Astrocyte of the cerebellum (primary cell): ENCODE measurements at regions of chr11 and their contacts with region 1.

Region 1: GRCh38 chr11:81687057-81687456 is 1046.6 kb downstream of the FAM181B start:
- DNase-seq: no peak
- H3K4me3 ChIP-seq: no peak overlapping the region
- CTCF ChIP-seq: no peak

Region 2: DNA sequence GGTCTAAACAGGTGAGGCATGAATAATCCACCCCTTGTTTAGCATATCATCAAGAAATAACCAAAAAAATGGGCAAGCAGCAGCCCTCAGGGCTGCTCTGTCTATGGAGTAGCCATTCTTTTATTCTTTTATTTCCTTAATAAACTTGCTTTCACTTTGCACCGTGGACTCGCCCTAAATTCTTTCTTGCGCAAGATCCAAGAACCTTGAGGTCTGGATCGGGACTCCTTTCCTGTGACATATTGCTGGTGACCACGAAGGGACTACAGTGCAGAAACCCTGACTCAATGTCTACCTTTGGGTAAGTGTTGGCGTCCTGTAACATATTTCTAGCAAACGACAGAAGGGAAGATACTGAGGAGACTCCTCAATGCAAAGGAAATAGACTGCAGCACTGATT is 52.6 kb before region 1 on chr11:
- in situ Hi-C with region 1: no loop called
- DNase-seq: no peak
- H3K4me3 ChIP-seq: no peak overlapping the region
- CTCF ChIP-seq: no peak

Region 3: GRCh38 chr11:81744336-81745116 is 57.5 kb after region 1 on chr11:
- in situ Hi-C with region 1: loop called (anchors 5 kb)
- DNase-seq: no peak
- H3K4me3 ChIP-seq: no peak overlapping the region
- CTCF ChIP-seq: no peak